ENCODE measurements at regions of chr4 and their contacts with region 1.

Region 1: GRCh38 chr4:173013232-173013930 is 155.2 kb upstream of the GALNT7 start:
- DNase-seq: no peak
- H3K4me3 ChIP-seq: no peak overlapping the region
- H3K27me3 ChIP-seq: peaks cover under 1% of the 10 kb centered on the region
- CTCF ChIP-seq: peak; percentile 74

Region 2: DNA sequence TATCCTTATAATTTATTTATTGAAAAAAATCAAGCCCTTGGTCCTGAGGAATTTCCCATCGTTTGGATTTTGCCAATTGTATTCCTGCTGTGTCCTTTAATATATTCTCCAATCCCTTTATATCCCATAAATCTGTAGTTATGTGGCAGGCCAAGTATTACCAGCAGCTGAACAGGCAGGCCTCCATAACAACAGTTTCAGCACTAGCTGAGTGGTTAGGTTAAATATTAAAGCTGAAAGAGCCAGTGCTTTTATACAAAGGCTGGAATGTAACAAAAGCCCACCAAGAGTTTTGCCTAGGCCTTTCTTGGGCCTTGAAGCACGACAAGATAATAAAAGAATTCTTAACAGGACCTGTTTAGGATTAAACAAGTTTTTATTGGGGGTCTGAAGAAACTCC is 211.3 kb before region 1 on chr4:
- CTCF ChIA-PET with region 1: no interaction called
- POLR2A ChIA-PET with region 1: no interaction called
- DNase-seq: no peak
- H3K4me3 ChIP-seq: no peak overlapping the region
- H3K27me3 ChIP-seq: no peaks in the 10 kb centered on the region
- CTCF ChIP-seq: no peak

Region 3: GRCh38 chr4:172998527-172999469 is 14.6 kb before region 1 on chr4:
- CTCF ChIA-PET with region 1: interaction called, 11 read pairs
- POLR2A ChIA-PET with region 1: no interaction called
- DNase-seq: no peak
- H3K4me3 ChIP-seq: no peak overlapping the region
- H3K27me3 ChIP-seq: peaks cover 2% of the 10 kb centered on the region; the same call in 1 of the 2 replicates
- CTCF ChIP-seq: no peak

Region 4: DNA sequence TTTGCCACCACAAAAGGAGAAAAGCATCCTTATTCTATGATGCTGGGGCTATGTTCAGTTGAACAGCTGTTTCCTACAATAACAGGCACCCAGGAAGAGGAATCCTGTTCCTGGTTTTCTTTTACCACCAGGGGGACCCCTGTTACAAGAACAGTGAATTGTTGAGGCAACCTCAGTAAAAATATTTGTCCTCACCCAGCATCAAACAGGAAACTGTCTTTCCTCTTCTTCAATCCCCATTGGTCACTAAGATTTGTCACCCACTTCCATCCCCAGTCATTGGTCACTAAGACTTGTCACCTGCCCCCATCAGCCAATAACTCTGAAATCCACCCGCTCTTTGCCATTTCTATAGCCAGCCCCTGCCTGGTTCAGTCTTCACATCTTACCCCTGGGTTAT is 11.8 kb after region 1 on chr4:
- CTCF ChIA-PET with region 1: interaction called, 34 read pairs
- POLR2A ChIA-PET with region 1: no interaction called
- DNase-seq: no peak
- H3K4me3 ChIP-seq: no peak overlapping the region
- H3K27me3 ChIP-seq: no peaks in the 10 kb centered on the region; the same call in 1 of the 2 replicates
- CTCF ChIP-seq: peak; percentile 73

Region 5: DNA sequence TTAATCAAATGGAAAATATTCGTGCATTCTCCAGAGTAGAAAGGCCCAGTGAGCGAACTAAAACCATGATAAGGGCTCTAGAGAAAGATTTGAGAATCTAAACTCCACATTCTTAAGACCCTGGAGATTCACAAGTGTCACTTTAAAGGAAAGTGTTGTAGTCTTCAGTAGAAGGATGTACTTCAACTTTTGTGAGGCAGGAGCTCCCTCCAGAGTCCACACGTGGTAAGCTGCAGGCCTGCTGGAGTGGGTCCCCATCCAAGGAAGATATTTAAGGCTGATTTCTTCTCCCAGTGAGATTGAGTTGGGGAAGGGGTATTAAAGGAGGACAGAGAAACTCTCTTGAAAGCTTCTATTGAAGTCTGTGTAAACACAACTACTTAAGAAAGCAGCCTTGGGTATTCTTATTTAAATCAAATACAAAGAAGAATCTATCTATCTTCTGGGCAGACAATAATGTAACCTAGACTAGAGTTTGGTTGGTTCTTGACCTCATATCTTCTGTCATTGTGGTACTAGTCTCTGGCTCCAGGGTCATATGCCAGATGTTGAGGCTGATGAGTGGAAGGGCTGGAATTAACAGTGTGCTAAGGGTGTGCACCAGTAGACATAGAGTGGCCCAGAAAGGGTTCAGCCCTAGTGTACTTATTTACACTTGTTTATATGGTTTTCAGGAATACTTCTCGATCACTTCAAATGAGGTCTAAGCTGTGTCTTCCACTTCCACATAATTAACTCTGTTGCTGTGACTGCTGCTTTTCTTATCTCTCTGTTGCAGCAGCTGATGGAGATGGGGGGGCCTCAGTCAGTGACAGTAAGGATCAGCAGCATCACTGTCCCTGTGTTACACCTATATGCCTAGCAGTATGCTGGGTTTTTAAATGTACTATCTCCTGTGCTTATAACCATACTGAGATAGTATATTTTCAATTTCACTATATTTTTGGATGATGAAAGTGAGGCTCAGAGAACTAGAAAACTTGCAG is 244.6 kb after region 1 on chr4:
- CTCF ChIA-PET with region 1: interaction called, 92 read pairs
- POLR2A ChIA-PET with region 1: no interaction called
- DNase-seq: no peak
- H3K4me3 ChIP-seq: no peak overlapping the region
- H3K27me3 ChIP-seq: peaks cover 3% of the 10 kb centered on the region
- CTCF ChIP-seq: peak; percentile 89

Region 6: GRCh38 chr4:173264684-173265185 is 251.4 kb after region 1 on chr4:
- CTCF ChIA-PET with region 1: interaction called, 20 read pairs
- POLR2A ChIA-PET with region 1: no interaction called
- DNase-seq: no peak
- H3K4me3 ChIP-seq: no peak overlapping the region
- H3K27me3 ChIP-seq: no peaks in the 10 kb centered on the region
- CTCF ChIP-seq: no peak

Region 7: DNA sequence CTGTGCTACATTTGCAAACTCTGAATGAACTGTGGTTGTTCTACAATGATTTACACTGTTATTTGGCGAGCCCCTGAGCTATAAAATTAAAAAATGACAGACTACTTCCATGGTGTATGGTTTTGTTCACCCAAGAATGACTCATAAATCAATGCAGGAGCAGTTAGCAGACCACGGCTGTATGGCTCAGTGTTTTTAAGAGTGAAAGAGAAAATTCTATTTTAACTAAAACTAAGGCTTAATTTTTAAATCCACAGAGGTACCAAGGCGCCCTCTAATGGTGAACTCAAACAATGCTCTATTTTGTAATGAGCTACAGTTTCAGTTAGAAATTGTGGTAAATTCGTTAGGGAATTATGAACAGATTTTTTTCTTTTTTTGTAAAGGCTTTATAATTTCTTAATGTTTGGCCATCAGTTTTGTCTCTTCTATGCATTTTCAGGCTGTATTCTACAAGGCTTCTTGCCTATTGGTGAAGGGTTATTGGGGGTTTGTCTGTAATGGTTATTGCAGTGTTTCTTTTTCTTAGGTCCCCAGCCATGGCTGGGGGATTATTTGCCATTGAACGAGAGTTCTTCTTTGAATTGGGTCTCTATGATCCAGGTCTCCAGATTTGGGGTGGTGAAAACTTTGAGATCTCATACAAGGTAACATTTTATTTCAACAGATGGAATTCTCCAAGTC is 288.3 kb after region 1 on chr4:
- CTCF ChIA-PET with region 1: interaction called, 24 read pairs
- POLR2A ChIA-PET with region 1: no interaction called
- DNase-seq: no peak
- H3K4me3 ChIP-seq: no peak overlapping the region
- H3K27me3 ChIP-seq: no peaks in the 10 kb centered on the region
- CTCF ChIP-seq: peak; percentile 65

Region 8: DNA sequence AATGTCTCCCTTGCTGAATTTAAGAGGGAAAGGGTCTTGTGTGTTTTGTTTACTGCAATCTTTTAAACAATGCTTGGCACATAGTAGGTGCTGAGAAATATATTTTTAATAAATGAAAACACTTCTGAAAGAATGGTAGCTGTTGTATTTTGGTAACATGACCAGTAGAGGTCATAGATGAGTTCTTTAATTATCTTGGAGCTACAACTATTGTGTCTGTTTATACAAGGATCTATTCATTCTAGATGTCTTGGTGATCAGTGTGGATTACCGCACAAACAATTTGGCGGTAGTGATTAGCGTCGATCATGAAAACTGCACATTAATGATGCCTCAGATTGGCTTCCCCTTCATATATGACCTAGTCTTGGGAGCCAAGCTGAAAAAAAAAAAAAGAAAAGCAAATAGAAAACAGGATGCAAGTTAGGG is 407.0 kb after region 1 on chr4:
- CTCF ChIA-PET with region 1: no interaction called
- POLR2A ChIA-PET with region 1: no interaction called
- DNase-seq: no peak
- H3K4me3 ChIP-seq: no peak overlapping the region
- H3K27me3 ChIP-seq: no peaks in the 10 kb centered on the region
- CTCF ChIP-seq: peak; percentile 38

Measured in BJ (cell line).